Cardiac septum (tissue), 1 donor: ENCODE measurements at regions of chrX and their contacts with region 1.

Region 1: DNA sequence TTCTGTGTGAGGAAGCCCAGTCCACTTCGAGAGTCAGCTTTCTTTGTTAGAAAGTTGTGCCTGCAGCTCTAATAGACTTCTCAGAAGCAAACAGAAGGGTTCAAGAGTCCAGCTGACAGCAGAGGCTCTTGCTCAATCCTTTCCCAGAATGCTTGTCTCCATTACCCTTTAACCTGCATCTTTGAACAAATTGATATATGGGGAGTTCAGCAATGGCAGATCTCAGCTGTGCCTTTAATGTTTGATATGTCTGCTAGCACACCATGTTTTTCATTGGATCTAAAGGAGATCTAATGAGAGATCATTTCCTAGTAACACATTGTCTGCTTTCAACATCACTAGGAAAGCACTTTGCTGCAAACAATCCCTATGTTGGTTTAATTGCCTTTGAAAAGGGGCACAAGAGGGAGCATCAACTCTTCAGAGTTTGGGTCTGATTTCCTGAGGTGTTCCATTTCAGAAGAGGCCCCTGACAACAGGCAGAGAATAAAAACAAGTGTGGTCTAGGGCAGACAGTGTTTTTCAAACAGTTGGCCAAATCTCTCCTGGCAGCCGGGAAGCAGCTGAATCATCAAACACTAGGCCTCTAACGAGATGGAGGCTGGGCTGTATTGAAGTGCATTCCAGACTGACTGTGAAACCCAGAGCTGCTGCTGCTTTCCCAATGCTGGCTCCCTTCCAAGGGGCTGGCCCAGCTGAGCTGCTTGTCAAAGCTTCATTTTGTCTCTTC is 55.5 kb downstream of the LUZP4 start:
- DNase-seq: peak; percentile 86

Region 2: GRCh38 chrX:115449742-115450141 is 104.7 kb after region 1 on chrX:
- intact Hi-C with region 1: loop called (anchors 10 kb)
- DNase-seq: no peak

Region 3: DNA sequence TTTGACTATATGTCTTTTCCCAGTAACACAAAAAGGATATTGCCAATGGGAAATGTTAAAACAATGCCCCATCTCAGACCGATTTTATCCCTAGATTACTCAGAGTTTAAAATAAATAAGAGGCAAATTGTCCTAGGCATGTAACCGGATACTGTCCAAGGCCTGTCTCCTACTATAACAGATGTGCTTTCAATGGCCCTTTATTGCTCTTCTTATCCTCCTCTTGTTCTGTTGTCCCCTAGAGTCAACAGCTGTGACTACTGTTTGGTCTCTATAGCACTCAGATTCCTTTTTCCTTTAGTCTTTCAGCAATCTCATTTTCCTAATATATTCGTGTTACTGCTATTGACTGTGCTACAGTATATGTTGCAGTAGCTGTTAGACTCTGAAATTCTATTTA is 149.1 kb after region 1 on chrX:
- intact Hi-C with region 1: no loop called
- DNase-seq: no peak